Sciatic nerve (tissue), 2 donors: ENCODE measurements at regions of chr6 and their contacts with region 1.

Region 1: GRCh38 chr6:67698534-67698933 is 936.5 kb upstream of the ADGRB3 start:
- DNase-seq: no peak
- ATAC-seq: no peak

Region 2: DNA sequence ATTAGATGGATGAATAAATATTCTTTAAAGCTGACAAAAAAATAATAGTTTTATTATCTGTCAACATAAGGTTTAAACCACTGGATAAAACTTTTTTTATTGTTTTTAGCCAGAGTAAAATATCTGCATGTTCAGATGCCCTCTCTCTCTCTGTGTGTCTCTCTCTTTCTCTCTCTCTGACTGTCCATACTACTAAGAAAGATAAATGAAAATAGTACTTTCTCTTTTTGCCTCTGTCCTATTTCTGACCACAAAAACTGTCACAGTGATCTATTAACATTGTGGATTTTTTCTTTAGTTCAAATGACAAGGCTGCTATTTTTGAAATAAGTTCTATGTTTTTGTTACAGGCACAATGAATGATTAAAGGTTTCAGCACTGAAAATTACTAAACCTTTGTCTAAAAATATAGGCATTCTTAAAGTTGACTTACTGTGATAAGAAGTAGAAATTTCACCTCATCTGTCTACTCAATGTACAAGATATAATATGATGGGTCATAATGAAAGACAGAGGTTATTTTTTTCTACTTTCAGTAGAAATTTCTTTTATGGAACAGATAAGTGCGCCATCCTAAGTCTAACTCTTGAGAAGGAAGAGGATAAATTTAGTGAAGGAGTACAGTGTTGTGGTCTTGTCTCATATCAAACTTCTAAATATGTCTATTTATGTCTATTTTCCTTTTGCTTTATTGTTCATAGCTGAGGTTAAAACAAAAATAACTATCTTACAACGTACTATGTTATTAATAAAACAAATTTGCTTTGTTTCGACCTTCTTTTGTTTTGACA is 1649.7 kb before region 1 on chr6:
- intact Hi-C with region 1: loop called (anchors 5 kb)
- DNase-seq: no peak
- ATAC-seq: no peak

Region 3: DNA sequence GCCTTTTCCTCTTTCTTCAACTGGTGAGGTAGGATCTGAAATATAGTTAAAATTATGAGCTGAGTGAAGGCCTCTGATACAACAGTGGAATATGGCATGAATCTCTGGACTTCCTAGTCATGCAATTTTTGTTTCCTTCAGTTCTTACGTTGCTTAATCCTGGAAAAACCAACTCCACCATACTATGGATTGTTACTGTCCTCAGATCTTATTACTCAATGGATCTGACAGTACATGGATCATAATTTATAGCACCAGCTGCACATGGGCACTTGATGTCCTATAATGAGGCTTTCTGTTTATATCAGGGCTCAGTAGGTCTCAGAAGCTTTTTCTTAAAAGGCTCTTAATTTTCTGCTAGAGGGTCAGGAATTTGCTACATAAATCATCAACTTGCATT is 650.5 kb before region 1 on chr6:
- intact Hi-C with region 1: no loop called
- DNase-seq: no peak
- ATAC-seq: no peak

Region 4: GRCh38 chr6:67300430-67301040 is 398.0 kb before region 1 on chr6:
- intact Hi-C with region 1: loop called (anchors 5 kb)
- DNase-seq: no peak
- ATAC-seq: no peak